ENCODE measurements at regions of chr6 and their contacts with region 1.

Region 1: DNA sequence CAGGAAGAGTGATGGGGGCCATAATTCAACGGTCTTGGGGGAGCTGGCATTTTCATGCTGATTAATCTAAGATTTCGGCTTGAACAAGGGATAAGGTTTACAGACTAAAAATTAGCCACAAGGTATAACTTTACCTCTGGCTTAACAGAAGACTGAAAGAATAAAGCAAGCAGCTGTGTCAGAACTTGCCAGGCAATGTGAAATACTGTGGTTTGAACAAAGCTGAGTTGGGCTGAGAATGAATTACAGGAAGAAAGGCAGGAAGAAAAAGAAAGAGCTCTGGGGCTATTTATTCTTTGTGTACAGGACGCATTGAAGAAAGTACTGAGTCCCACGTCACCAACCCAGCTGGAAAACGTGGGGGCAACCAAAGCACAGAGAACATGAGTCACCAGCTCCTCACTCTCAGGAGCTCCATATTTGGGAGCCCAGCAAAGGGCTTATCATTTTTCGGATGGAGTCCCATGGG is 121.5 kb upstream of the NEDD9 start:
- DNase-seq: peak; percentile 70 to 91
- H3K4me3 ChIP-seq: no peak overlapping the region
- H3K27ac ChIP-seq: peak overlapping the region; percentile 74 to 75
- H3K4me1 ChIP-seq: peaks cover 0 to 44% (median 19%) of the 10 kb centered on the region in 4 donors
- H3K27me3 ChIP-seq: no peaks in the 10 kb centered on the region
- CTCF ChIP-seq: no peak

Region 2: DNA sequence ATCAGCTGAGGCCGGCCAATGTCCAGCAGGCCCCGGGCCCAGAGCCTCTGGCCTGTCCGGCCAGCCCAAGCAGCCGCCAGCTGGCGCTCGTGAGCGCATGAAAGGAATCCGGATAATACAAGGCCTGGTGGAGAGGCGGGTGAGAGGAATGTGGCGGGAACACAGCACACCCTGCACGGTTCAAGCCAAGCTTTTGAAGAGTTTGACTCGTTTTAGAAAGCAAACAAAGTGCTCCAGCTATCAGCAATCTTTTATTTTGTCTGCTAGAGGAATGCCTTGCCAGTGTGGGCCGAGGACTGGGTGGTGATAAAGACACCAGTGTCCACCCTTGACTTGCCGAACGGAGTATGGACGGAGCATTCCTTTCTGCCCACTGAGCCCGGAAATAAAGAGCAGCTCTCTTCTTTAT is 112.2 kb before region 1 on chr6:
- intact Hi-C with region 1: loop called (anchors 5 kb)
- DNase-seq: peak; percentile 81 to 87
- H3K4me3 ChIP-seq: no peak overlapping the region
- H3K27ac ChIP-seq: peak overlapping the region in 1 of 2 donors; percentile 44
- H3K4me1 ChIP-seq: peaks cover 0 to 45% (median 21%) of the 10 kb centered on the region in 4 donors
- H3K27me3 ChIP-seq: no peaks in the 10 kb centered on the region
- CTCF ChIP-seq: peak; percentile 80 to 83

Region 3: DNA sequence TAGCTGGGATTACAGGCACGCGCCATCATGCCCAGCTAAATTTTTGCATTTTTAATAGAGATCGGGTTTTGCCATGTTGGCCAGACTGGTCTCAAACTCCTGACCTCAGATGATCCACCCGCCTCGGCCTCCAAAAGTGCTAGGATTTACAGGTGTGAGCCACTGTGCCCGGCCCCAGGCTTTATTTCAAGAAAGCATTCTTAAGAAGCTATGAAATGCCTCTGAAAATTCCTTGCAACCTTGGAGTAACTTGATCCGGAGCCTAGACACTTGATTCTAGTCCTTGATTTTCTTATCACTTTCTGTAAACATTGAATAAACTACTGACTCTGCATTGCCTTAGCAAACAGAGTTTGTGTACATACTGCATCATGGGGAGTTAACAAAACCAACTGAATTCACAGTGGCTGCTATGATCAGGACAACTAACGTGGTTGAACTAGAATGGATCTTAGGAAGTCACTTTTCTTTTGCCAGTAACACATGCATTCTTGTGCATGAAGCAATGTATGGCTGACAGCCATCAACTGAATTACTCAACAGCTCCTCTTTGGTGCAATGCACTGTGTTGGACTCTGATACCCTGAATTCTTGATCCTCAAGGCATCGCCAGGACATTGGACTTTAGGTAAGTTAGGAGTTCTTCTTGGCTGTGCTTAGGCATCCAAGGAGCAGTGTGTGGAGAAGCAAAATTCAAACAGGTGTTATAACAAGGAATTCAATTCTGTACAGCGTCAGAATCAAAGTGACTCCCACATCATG is 80.8 kb after region 1 on chr6:
- intact Hi-C with region 1: loop called (anchors 10 kb)
- DNase-seq: peak in 1 of 2 donors; percentile 74
- H3K4me3 ChIP-seq: no peak overlapping the region
- H3K27ac ChIP-seq: peak overlapping the region; percentile 77 to 82
- H3K4me1 ChIP-seq: peaks cover 0 to 71% (median 31%) of the 10 kb centered on the region in 4 donors
- H3K27me3 ChIP-seq: no peaks in the 10 kb centered on the region
- CTCF ChIP-seq: no peak

Region 4: GRCh38 chr6:11744753-11745152 is 390.8 kb after region 1 on chr6:
- intact Hi-C with region 1: no loop called
- DNase-seq: peak; percentile 90 to 92
- H3K4me3 ChIP-seq: no peak overlapping the region
- H3K27ac ChIP-seq: peak overlapping the region; percentile 64
- H3K4me1 ChIP-seq: peaks cover 0 to 33% (median 15%) of the 10 kb centered on the region in 4 donors
- H3K27me3 ChIP-seq: no peaks in the 10 kb centered on the region
- CTCF ChIP-seq: no peak

Region 5: GRCh38 chr6:12804952-12805645 is 1451.1 kb after region 1 on chr6:
- intact Hi-C with region 1: no loop called
- DNase-seq: no peak
- H3K4me3 ChIP-seq: no peak overlapping the region
- H3K27ac ChIP-seq: no peak overlapping the region
- H3K4me1 ChIP-seq: no peaks in the 10 kb centered on the region
- H3K27me3 ChIP-seq: no peaks in the 10 kb centered on the region
- CTCF ChIP-seq: no peak

Measured in tibial artery (tissue), 4 donors.